ENCODE measurements at regions of chr7 and their contacts with region 1.

Region 1: DNA sequence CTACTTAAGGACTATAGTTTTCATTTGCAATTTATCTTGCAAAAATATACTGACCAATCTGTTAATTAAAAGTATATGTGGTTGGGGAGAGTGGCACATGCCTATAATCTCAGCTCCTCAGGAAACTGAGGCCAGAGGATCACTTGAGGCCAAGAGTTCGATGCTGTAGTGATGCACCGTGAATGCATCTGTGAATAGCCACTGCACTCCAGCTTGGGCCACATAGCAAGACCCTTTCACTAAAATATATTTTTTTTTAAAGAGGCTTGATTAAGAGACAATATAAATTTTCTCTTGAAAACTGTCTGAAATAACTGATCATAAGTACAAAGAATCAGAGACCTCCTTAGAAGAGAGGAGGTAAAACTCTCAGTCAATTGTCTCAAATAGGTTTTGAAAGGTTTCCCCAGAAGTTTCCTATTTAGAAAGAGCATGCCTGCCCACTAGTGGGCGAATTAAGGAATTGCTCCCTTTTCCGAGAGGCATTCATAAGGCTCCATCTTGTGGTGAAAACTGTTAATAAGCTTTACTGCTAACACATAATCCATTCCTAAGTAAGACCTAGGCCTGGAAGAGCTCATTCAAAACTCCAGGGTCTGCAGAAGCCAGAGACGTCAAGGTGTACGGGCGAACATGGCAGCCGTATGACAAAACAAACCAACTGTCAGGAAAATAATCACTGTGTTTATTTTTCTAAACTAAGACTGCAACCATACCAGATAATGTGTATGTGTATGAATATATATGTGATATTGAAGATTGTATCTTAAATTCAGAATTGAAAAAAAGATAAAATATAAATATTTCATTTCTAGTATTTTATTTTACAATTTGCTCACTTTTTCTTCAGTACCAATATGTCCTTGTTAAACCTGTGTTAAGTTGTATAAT is 6.8 kb upstream of the TAS2R40 start:
- DNase-seq: peak in 34 of 35 experiments; percentile 26 to 89 (median 51)
- ATAC-seq: peak; percentile 77 to 90 (median 84)
- H3K4me3 ChIP-seq: no peak overlapping the region
- H3K4me3 Mint-ChIP-seq: no peak overlapping the region
- H3K27ac ChIP-seq: no peak overlapping the region
- H3K27ac Mint-ChIP-seq: no peak overlapping the region
- H3K4me1 ChIP-seq: no peaks in the 10 kb centered on the region
- H3K4me1 Mint-ChIP-seq: no peaks in the 10 kb centered on the region
- H3K27me3 ChIP-seq: peaks cover 0 to 5% of the 10 kb centered on the region in 2 experiments
- H3K27me3 Mint-ChIP-seq: peaks cover 3 to 9% of the 10 kb centered on the region in 2 donors

Region 2: GRCh38 chr7:141975806-141976523 is 1239.1 kb before region 1 on chr7:
- CTCF ChIA-PET with region 1: interaction called in 1 of 2 experiments, 16 read pairs
- POLR2A ChIA-PET with region 1: interaction called in 1 of 2 experiments, 3 read pairs
- DNase-seq: peak; percentile 12 to 69 (median 48)
- ATAC-seq: peak; percentile 53 to 92 (median 80)
- H3K4me3 ChIP-seq: peak overlapping the region; percentile 51 to 75
- H3K4me3 Mint-ChIP-seq: peak overlapping the region; percentile 74 to 80 (median 75)
- H3K27ac ChIP-seq: peak overlapping the region; percentile 21
- H3K27ac Mint-ChIP-seq: peak overlapping the region; percentile 56 to 63
- H3K4me1 ChIP-seq: peaks cover 0 to 8% of the 10 kb centered on the region in 2 experiments
- H3K4me1 Mint-ChIP-seq: peaks cover 20 to 27% (median 27%) of the 10 kb centered on the region in 3 donors
- H3K27me3 ChIP-seq: no peaks in the 10 kb centered on the region
- H3K27me3 Mint-ChIP-seq: no peaks in the 10 kb centered on the region

Region 3: GRCh38 chr7:142130267-142130666 is 1084.8 kb before region 1 on chr7:
- CTCF ChIA-PET with region 1: no interaction called
- POLR2A ChIA-PET with region 1: no interaction called
- DNase-seq: no peak
- ATAC-seq: no peak
- H3K4me3 ChIP-seq: no peak overlapping the region
- H3K4me3 Mint-ChIP-seq: no peak overlapping the region
- H3K27ac ChIP-seq: no peak overlapping the region
- H3K27ac Mint-ChIP-seq: no peak overlapping the region
- H3K4me1 ChIP-seq: no peaks in the 10 kb centered on the region
- H3K4me1 Mint-ChIP-seq: no peaks in the 10 kb centered on the region
- H3K27me3 ChIP-seq: no peaks in the 10 kb centered on the region
- H3K27me3 Mint-ChIP-seq: peaks cover 3 to 4% of the 10 kb centered on the region in 2 donors

Region 4: DNA sequence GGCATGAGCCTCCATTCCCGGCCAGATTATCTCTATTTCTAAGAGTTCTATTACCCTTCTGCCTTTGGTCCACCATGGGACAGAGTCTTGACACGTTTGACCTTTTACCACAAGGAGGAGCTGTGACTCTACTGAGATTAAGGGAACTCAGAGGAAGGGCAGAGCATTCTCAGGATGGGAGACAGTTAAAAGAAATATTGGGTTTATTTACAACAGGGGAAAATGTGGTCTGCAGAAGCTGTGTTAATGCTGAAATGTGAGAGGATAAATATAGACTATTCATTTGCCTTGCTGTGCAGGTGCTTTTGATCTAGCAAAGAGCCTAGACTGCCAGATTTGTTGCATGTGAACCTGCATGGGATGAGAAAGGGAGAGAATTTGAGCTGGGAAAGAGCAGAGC is 911.4 kb before region 1 on chr7:
- CTCF ChIA-PET with region 1: interaction called, 3 to 10 read pairs
- POLR2A ChIA-PET with region 1: no interaction called
- DNase-seq: peak in 2 of 35 experiments; percentile 24 to 67
- ATAC-seq: peak; percentile 45 to 67 (median 53)
- H3K4me3 ChIP-seq: no peak overlapping the region
- H3K4me3 Mint-ChIP-seq: peak overlapping the region in 1 of 3 donors; percentile 4
- H3K27ac ChIP-seq: no peak overlapping the region
- H3K27ac Mint-ChIP-seq: peak overlapping the region; percentile 19 to 49
- H3K4me1 ChIP-seq: peaks cover 12 to 14% of the 10 kb centered on the region in 2 experiments
- H3K4me1 Mint-ChIP-seq: peaks cover 24 to 39% (median 24%) of the 10 kb centered on the region in 3 donors
- H3K27me3 ChIP-seq: peaks cover 0 to 6% of the 10 kb centered on the region in 2 experiments
- H3K27me3 Mint-ChIP-seq: peaks cover 4 to 25% of the 10 kb centered on the region in 2 donors

Region 5: GRCh38 chr7:142998966-142999365 is 216.1 kb before region 1 on chr7:
- CTCF ChIA-PET with region 1: interaction called, 45 to 49 read pairs
- POLR2A ChIA-PET with region 1: no interaction called
- DNase-seq: no peak
- ATAC-seq: no peak
- H3K4me3 ChIP-seq: no peak overlapping the region
- H3K4me3 Mint-ChIP-seq: no peak overlapping the region
- H3K27ac ChIP-seq: no peak overlapping the region
- H3K27ac Mint-ChIP-seq: no peak overlapping the region
- H3K4me1 ChIP-seq: peaks cover 2 to 5% of the 10 kb centered on the region in 2 experiments
- H3K4me1 Mint-ChIP-seq: peaks cover 6 to 8% (median 7%) of the 10 kb centered on the region in 3 donors
- H3K27me3 ChIP-seq: no peaks in the 10 kb centered on the region
- H3K27me3 Mint-ChIP-seq: peaks cover 0 to 2% of the 10 kb centered on the region in 2 donors

Region 6: GRCh38 chr7:143008007-143008901 is 206.8 kb before region 1 on chr7:
- CTCF ChIA-PET with region 1: interaction called, 45 to 111 read pairs
- POLR2A ChIA-PET with region 1: no interaction called
- DNase-seq: peak; percentile 48 to 91 (median 75)
- ATAC-seq: peak; percentile 85 to 94 (median 90)
- H3K4me3 ChIP-seq: no peak overlapping the region
- H3K4me3 Mint-ChIP-seq: no peak overlapping the region
- H3K27ac ChIP-seq: no peak overlapping the region
- H3K27ac Mint-ChIP-seq: no peak overlapping the region
- H3K4me1 ChIP-seq: peaks cover under 1 to 2% of the 10 kb centered on the region in 2 experiments
- H3K4me1 Mint-ChIP-seq: peaks cover 4 to 7% (median 5%) of the 10 kb centered on the region in 3 donors
- H3K27me3 ChIP-seq: peaks cover 0 to 7% of the 10 kb centered on the region in 2 experiments
- H3K27me3 Mint-ChIP-seq: peaks cover 5 to 10% of the 10 kb centered on the region in 2 donors

Region 7: GRCh38 chr7:143733876-143734275 is 518.8 kb after region 1 on chr7:
- CTCF ChIA-PET with region 1: no interaction called
- POLR2A ChIA-PET with region 1: no interaction called
- DNase-seq: peak in 1 of 35 experiments; percentile 0
- ATAC-seq: no peak
- H3K4me3 ChIP-seq: no peak overlapping the region
- H3K4me3 Mint-ChIP-seq: no peak overlapping the region
- H3K27ac ChIP-seq: no peak overlapping the region
- H3K27ac Mint-ChIP-seq: peak overlapping the region in 1 of 2 donors; percentile 29
- H3K4me1 ChIP-seq: no peaks in the 10 kb centered on the region
- H3K4me1 Mint-ChIP-seq: peaks cover 5 to 8% (median 7%) of the 10 kb centered on the region in 3 donors
- H3K27me3 ChIP-seq: no peaks in the 10 kb centered on the region
- H3K27me3 Mint-ChIP-seq: no peaks in the 10 kb centered on the region